ENCODE measurements at regions of chr5 and their contacts with region 1.

Region 1: GRCh38 chr5:148107608-148108007 is 43.8 kb downstream of the SPINK5 start:
- DNase-seq: no peak
- ATAC-seq: no peak

Region 2: DNA sequence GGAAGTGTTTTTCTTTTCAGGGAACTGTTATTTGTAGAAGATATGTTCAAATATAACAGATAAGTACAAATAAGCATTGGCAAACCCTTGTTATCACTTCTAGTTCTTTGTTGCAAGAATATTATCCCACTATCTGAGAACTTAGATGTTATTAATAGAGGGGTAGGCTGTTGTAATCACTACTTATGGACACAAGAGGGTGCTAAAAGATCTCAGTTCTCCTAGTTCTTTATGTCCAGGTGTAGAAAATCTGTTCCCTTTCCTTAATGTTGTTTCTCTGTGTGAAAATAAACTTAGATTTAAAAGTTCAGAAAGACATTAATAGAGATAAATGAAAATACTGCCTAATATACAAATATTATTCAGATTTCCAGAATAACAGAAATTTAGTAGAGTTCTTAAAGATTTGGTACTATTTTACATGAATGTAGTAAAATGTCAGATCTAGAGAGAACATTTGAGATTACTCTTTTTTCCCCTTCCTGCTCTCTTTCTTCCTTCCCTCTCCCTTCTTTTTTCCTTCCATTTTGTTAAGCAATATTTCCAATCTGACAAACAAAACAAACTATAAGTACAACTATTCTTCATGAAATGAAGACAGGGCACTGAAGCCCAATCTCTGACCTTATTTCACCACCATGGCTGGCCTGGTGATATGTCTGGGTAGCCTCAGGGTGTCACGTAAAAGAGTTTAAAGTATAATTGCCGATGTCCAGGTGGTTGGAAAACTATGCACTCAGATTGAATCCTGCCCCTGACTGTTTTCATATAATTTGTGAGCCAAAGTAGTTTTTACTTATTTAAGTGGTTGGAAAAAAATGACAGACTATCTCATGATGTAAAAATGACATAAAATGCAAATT is 157.7 kb before region 1 on chr5:
- intact Hi-C with region 1: loop called (anchors 5 kb)
- DNase-seq: no peak
- ATAC-seq: no peak

Measured in Right ventricle myocardium inferior (tissue), 1 donor.